ENCODE measurements at regions of chr2 and their contacts with region 1.

Region 1: DNA sequence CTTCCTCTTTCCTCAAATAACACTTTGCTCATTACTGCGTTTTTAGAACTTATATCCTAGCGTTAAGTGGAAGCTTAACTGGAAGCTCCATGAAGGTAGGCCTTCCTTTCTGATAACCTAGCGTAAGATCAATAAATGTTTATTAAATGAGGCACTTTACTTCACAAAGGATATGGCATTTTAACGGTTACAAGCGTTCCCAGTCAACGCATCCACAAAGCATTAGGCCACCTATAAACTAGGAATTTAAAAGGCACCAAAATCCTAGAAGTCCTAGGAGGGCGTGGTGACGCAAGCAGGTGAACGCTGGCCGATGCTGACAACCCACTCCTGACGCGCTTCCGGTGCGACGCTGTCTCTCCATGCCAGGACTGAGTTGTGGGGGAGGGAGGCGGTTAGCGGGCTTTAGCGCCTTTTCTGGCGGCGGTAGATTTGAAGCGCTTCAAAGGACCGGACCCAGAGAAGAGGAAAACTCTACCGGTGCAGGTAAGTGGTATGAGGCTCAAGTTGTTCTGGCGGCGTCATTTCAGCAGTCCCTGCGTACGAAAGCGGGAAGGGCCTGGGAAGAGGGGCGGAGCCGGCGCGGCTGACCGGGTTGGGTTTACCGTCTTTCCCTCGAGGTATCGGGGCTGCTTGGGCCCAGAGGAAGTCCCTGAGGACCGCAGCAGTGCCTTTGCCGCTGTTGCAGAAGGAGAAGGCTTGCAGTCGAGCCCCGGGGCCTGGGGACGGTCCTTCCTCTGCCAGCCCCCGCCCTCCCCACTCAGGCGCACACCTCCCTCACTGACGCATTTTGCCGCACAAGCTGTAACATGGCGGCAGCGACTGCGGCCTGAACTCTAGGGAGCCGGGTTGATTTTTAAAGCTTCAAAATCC is at the start of gene PPIG:
- DNase-seq: peak; percentile 73 to 93 (median 88)
- ATAC-seq: peak; percentile 87 to 91
- H3K4me3 Mint-ChIP-seq: peak within 1 kb of the TSS; percentile 96 to 99 (median 98)
- H3K27ac Mint-ChIP-seq: peak within 1 kb of the TSS; percentile 97 to 100 (median 100)
- H3K4me1 Mint-ChIP-seq: peaks cover 12 to 46% (median 42%) of the 10 kb centered on the region in 4 donors
- H3K27me3 Mint-ChIP-seq: no peaks in the 10 kb centered on the region
- polyA plus RNA-seq, gene PPIG: 63.4 to 88.2 (median 70.9) TPM

Region 2: GRCh38 chr2:169468841-169469240 is 115.4 kb before region 1 on chr2:
- POLR2A ChIA-PET with region 1: no interaction called
- DNase-seq: peak in 2 of 10 donors; percentile 13 to 22
- ATAC-seq: no peak
- H3K4me3 Mint-ChIP-seq: no peak overlapping the region
- H3K27ac Mint-ChIP-seq: no peak overlapping the region
- H3K4me1 Mint-ChIP-seq: peaks cover 0 to 3% (median 0%) of the 10 kb centered on the region in 4 donors
- H3K27me3 Mint-ChIP-seq: no peaks in the 10 kb centered on the region

Region 3: GRCh38 chr2:169479257-169480078 is 104.8 kb before region 1 on chr2 and contains the start of gene BBS5:
- POLR2A ChIA-PET with region 1: interaction called, 10 read pairs
- DNase-seq: peak; percentile 35 to 82 (median 67)
- ATAC-seq: peak; percentile 96
- H3K4me3 Mint-ChIP-seq: peak within 1 kb of the TSS; percentile 90 to 97 (median 92)
- H3K27ac Mint-ChIP-seq: peak within 1 kb of the TSS; percentile 53 to 96 (median 90)
- H3K4me1 Mint-ChIP-seq: peaks cover 9 to 32% (median 21%) of the 10 kb centered on the region in 4 donors
- H3K27me3 Mint-ChIP-seq: no peaks in the 10 kb centered on the region
- polyA plus RNA-seq, gene BBS5: 1.0 to 1.4 (median 1.3) TPM

Region 4: GRCh38 chr2:169573160-169573973 is 10.9 kb before region 1 on chr2 and contains the start of gene FASTKD1:
- POLR2A ChIA-PET with region 1: interaction called, 38 read pairs
- DNase-seq: peak; percentile 67 to 88 (median 78)
- ATAC-seq: peak; percentile 100
- H3K4me3 Mint-ChIP-seq: peak within 1 kb of the TSS; percentile 95 to 100 (median 97)
- H3K27ac Mint-ChIP-seq: peak within 1 kb of the TSS; percentile 39 to 98 (median 95)
- H3K4me1 Mint-ChIP-seq: peaks cover 9 to 27% (median 20%) of the 10 kb centered on the region in 4 donors
- H3K27me3 Mint-ChIP-seq: peaks cover 0 to 3% (median 0%) of the 10 kb centered on the region in 5 donors
- polyA plus RNA-seq, gene FASTKD1: 10.8 to 17.3 (median 16.5) TPM

Measured in naive thymus-derived CD8-positive, alpha-beta T cell (primary cell).